ENCODE measurements at regions of chr1 and their contacts with region 1.

Region 1: DNA sequence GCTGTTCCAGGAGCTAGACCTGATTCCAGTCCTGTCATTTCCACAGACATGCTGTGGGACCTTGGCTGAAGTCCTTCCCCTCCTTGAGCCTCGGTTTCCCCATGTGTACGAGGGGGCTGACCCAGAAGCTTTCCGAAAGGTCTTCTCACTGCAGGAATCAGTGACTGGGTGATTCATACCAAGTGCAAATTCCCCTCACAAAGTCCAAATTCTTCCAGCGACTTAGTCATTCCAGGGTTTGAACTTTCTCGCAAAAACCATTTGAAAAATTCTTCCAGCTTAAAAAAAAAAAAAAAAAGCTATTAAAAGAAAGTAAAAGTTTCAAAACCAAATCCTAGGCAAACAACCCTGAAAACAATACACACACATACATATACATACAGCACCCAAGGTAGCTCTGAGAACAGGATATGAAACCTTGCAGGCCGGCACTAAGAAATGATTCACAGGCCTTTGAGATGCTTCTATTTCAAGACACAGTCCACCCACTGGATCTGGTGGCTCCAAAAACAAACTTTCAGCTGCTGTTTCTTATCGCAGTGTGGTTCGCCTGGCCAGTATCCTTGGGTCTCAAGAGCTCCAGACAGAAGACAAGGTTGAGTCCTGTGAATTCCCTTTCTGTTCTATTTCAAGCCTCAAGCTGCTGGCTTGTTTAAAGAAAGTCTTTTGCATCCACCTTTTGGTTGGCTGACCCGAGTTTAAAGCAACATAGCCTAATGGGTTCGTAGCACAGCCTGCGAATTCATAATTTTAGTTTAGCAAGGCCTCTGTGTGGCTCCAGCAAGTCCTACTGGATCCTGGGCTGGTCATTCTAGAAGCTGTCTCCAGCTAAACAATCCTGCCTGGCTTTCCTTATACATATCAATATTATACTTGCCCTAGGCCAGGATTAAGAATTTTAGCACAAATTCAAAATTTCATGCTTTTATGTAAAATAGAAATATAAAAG is 18.0 kb upstream of the ID3 start:
- DNase-seq: no peak
- H3K4me3 Mint-ChIP-seq: peak overlapping the region; percentile 60
- H3K27ac Mint-ChIP-seq: peak overlapping the region; percentile 71
- H3K4me1 Mint-ChIP-seq: peaks cover 27% of the 10 kb centered on the region
- H3K27me3 Mint-ChIP-seq: no peaks in the 10 kb centered on the region

Region 2: DNA sequence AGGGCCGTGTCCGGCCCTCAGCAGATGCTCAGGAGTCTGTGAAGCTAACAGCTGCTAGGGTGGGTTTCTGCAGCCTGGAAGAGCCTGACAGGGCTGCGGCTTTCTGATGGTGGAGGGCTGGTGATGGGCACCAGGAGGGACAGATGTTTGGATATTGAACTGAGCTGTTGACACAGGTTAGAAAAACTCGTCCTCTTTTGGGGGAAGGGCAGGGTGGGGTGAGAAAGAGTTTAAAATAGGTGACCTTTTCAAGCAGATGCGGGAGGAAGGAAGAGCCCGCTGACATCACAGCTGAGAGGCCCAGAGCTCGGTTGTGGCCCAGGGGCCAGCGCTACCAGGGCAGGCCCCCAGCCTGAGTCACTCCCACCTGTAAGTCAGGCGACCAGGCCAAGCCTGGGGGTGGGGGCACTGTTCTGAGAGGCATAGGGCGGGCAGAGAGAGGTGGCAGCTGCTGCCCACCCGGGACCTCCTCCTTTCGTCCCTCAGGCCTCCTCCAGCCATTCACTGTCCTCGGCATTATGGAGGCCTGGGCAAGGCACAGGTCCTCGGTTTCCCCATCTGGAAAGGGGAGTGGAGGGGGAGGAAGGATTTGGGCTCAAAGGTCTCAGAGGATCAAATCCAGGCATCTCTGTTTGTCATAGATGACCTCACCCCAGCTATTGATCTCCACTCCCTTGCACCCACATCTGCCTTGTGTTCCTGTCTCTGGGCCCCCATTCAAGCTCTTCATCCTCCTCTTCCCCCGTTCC is 14.3 kb after region 1 on chr1:
- intact Hi-C with region 1: loop called (anchors 1 kb)
- DNase-seq: no peak
- H3K4me3 Mint-ChIP-seq: peak overlapping the region; percentile 51
- H3K27ac Mint-ChIP-seq: peak overlapping the region; percentile 95
- H3K4me1 Mint-ChIP-seq: peaks cover 45% of the 10 kb centered on the region
- H3K27me3 Mint-ChIP-seq: no peaks in the 10 kb centered on the region

Region 3: GRCh38 chr1:23613191-23614031 is 36.1 kb after region 1 on chr1:
- intact Hi-C with region 1: loop called (anchors 1 kb)
- DNase-seq: peak; percentile 58
- H3K4me3 Mint-ChIP-seq: peak overlapping the region; percentile 7
- H3K27ac Mint-ChIP-seq: peak overlapping the region; percentile 84
- H3K4me1 Mint-ChIP-seq: peaks cover 55% of the 10 kb centered on the region
- H3K27me3 Mint-ChIP-seq: no peaks in the 10 kb centered on the region